ENCODE measurements at regions of chr11 and their contacts with region 1.

Region 1: DNA sequence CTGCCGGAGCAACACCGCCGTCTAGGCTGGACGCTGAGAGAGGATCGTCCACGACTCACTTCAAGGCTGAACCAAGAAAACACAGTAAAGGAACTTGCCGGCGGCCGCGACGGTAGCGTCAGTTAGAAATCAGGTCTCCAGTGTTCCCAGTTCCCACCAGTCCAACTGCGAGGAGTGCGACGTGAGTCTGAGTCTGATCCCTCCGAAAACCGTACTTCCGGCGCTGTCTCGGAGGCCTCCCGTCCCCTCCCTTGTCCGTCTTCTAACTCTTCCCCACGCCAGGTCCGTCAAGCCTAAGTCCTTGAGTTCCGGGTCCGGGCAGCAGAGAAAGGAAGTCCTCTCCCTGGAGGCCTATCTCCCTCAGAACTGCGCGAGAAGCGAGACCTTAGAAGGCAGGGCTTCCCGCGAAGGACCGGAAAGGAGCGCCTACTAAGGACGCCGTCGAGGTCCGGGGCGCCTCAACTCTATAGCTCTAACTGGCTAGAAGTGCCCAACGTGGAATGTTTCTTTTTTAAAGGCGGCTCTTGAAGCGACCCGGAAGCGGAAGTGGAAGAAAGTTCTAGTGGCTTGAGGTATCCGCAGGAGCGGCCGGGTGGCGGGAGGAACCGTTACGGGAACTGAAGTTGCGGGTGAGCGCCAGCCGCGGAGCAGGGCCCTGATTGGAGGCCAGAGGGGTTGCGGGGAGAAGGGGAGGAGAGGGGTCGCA is at the starts of genes BANF1 and EIF1AD:
- DNase-seq: peak; percentile 99
- ATAC-seq: peak; percentile 74
- H3K4me3 ChIP-seq: peak within 1 kb of the TSS; percentile 85
- H3K27ac ChIP-seq: peak within 1 kb of the TSS; percentile 85
- H3K4me1 ChIP-seq: peaks cover 14% of the 10 kb centered on the region
- H3K27me3 ChIP-seq: no peaks in the 10 kb centered on the region
- CTCF ChIP-seq: no peak
- total RNA-seq, gene BANF1: 124 and 131 TPM in 2 replicates
- total RNA-seq, gene EIF1AD: 70.1 and 77.0 TPM in 2 replicates

Region 2: GRCh38 chr11:65791691-65792213 is 210.3 kb before region 1 on chr11:
- CTCF ChIA-PET with region 1: no interaction called
- POLR2A ChIA-PET with region 1: interaction called, 18 read pairs
- intact Hi-C with region 1: no loop called
- DNase-seq: peak; percentile 77
- ATAC-seq: peak; percentile 51
- H3K4me3 ChIP-seq: peak overlapping the region; percentile 39; the same call in 1 of the 2 replicates
- H3K27ac ChIP-seq: peak overlapping the region; percentile 57
- H3K4me1 ChIP-seq: peaks cover 61% of the 10 kb centered on the region
- H3K27me3 ChIP-seq: no peaks in the 10 kb centered on the region; the same call in 1 of the 2 replicates
- CTCF ChIP-seq: 0 out of 2 replicates have a peak, but pooled peaks have one; percentile 12

Region 3: GRCh38 chr11:65961232-65961901 is 40.7 kb before region 1 on chr11 and contains the start of gene SART1:
- CTCF ChIA-PET with region 1: no interaction called
- POLR2A ChIA-PET with region 1: no interaction called
- intact Hi-C with region 1: loop called (anchors 1 kb)
- DNase-seq: peak; percentile 98
- ATAC-seq: peak; percentile 96
- H3K4me3 ChIP-seq: peak within 1 kb of the TSS; percentile 95
- H3K27ac ChIP-seq: peak within 1 kb of the TSS; percentile 66
- H3K4me1 ChIP-seq: peaks cover 8% of the 10 kb centered on the region
- H3K27me3 ChIP-seq: no peaks in the 10 kb centered on the region
- CTCF ChIP-seq: no peak
- total RNA-seq, gene SART1: 240 and 267 TPM in 2 replicates

Region 4: DNA sequence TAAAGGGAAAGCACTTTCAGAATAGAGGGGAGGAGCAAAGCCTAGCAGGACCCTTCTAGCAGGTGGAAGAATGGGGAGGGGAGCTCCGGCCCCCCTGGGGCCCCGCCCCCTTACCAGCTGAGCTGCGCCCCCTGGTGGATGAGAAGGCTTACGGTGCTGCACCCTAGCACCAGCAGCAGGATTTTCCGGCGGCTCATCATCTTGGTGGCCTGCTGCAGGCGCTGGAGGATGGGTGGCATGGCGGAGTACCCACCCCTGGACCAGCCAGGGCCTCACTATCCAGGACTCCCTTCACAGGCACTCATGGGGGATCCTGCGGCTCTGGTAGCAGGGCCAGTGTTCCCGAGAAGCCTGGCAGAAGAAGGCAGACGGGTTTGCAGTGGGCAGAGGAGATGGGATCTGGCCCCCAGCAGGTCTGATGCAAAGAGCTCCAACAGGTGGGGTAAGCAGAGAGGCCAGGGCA is 43.1 kb after region 1 on chr11:
- CTCF ChIA-PET with region 1: no interaction called
- POLR2A ChIA-PET with region 1: no interaction called
- intact Hi-C with region 1: loop called (anchors 2 kb)
- DNase-seq: peak; percentile 90
- ATAC-seq: peak; percentile 98
- H3K4me3 ChIP-seq: 0 out of 2 replicates have a peak overlapping the region, but pooled peaks have one; percentile 15
- H3K27ac ChIP-seq: no peak overlapping the region
- H3K4me1 ChIP-seq: no peaks in the 10 kb centered on the region
- H3K27me3 ChIP-seq: no peaks in the 10 kb centered on the region
- CTCF ChIP-seq: peak; percentile 99

Region 5: DNA sequence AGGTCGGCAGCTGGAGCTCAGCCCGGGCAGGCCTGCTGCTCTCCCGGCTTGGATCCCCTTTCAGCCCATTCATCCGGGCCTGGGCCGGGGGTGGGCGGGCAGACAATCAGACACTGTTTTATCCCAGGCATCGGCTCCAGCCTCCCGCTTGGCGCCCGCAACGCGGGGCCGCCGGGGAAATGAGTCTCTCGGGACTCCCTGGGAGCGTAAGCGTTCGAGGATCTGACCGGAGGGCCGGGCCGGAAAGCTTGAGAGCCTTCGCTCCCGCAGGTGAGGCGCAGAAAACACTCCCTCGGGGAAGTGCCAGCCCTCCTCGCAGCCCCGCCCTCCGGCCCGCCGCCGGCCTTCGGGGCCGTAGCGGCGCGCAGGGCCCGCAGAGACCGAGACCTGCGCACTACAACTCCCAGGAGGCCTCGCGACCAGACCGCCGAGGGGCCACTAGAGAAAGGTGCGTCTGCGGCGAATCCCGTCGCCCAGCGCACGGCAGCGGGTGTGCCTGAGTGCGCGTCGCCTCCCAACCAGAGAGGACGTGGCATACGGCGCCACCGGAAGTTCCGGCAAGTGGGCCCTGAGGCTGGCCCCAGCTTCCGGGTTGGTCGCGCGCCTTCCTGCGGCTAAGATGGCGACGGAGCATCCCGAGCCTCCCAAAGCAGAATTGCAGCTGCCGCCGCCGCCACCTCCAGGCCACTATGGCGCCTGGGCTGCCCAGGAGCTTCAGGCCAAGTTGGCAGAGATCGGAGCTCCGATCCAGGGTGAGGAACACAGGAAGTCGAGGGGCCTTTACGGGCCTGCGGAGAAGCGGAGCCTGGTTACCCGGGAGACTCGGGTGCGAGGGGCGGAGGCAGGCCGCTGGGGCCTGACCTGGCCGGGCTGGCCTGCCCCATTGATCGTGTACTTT is 49.9 kb after region 1 on chr11 and contains the start of gene SF3B2:
- CTCF ChIA-PET with region 1: no interaction called
- POLR2A ChIA-PET with region 1: no interaction called
- intact Hi-C with region 1: loop called (anchors 2 kb)
- DNase-seq: peak; percentile 99
- ATAC-seq: peak; percentile 99
- H3K4me3 ChIP-seq: peak within 1 kb of the TSS; percentile 93
- H3K27ac ChIP-seq: peak within 1 kb of the TSS; percentile 49
- H3K4me1 ChIP-seq: peaks cover 18% of the 10 kb centered on the region
- H3K27me3 ChIP-seq: no peaks in the 10 kb centered on the region
- CTCF ChIP-seq: no peak
- total RNA-seq, gene SF3B2: 241 and 318 TPM in 2 replicates

Region 6: DNA sequence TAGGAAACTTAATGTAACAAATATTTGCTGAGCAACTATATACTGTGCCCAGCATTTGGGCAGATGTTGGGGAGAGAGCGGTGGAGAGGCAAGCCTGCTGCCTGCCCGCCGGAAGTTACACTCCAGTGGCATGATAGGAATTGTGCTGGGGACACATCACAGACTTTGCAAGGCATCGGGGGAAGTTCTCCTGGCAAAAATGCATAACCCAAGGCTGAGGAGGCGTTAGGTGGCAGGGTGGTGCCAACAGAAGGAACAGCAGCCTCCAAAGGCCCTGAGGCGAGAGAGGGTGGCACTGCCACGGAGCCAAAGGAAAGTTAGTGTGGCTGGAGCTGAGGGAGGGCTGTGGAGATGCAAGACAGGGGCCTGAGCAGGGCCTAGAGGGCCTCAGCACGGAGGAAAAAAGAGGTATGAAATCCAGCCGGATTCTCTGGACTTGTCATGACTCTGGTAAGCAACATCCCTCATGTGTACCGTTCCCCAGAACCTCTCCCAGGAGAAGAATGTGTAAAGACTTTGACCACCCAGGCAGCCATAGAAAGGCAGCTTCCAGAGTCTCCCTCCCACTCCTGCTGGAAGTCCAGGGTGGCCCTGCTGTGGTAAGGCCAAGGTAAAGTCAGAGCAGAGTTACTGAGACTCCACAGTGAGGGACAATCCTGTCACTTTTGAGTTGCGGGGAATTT is 190.2 kb after region 1 on chr11:
- CTCF ChIA-PET with region 1: no interaction called
- POLR2A ChIA-PET with region 1: no interaction called
- intact Hi-C with region 1: no loop called
- DNase-seq: no peak
- ATAC-seq: no peak
- H3K4me3 ChIP-seq: no peak overlapping the region
- H3K27ac ChIP-seq: no peak overlapping the region
- H3K4me1 ChIP-seq: peaks cover 38% of the 10 kb centered on the region
- H3K27me3 ChIP-seq: no peaks in the 10 kb centered on the region
- CTCF ChIP-seq: no peak